Tibial artery (tissue), 4 donors: ENCODE measurements at regions of chr5 and their contacts with region 1.

Region 1: DNA sequence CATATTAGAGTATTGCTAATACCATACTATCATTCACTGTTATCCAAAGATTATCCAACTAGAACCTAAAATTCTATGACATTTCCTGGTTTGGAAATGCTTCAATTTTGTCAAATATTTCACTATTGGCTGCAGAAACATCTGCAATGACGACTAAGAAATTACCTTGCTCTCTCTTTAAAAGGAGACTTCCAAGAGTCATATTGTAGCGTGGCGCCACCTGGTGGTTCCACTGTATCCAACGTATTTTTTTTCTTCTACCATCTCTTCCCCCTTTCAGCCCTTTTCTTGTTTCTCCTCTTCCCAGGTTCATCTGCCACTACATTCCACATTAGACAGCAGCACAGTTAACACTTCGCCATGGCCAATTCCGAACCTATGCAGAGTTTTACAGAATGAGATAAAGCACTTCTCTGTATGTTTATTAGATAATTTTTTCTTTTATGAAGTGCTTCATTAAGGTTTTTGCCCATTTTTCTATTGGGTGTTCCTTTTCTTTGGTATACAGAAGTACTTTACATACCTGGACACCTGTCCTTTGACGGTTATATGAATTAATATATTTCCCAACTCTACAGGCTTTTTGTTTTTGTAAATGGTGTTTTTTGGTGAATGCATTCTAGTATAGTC is 153.5 kb downstream of the CDC42SE2 start:
- DNase-seq: peak; percentile 63 to 83
- H3K4me3 ChIP-seq: no peak overlapping the region
- H3K27ac ChIP-seq: no peak overlapping the region
- H3K4me1 ChIP-seq: no peaks in the 10 kb centered on the region
- H3K27me3 ChIP-seq: no peaks in the 10 kb centered on the region
- CTCF ChIP-seq: peak; percentile 80 to 84

Region 2: GRCh38 chr5:131165119-131165727 is 252.1 kb before region 1 on chr5 and contains the start of gene HINT1:
- intact Hi-C with region 1: loop called (anchors 10 kb)
- DNase-seq: peak; percentile 83 to 93
- H3K4me3 ChIP-seq: peak within 1 kb of the TSS; percentile 68 to 75
- H3K27ac ChIP-seq: peak within 1 kb of the TSS; percentile 87 to 93
- H3K4me1 ChIP-seq: peaks cover 0 to 23% (median 7%) of the 10 kb centered on the region in 4 donors
- H3K27me3 ChIP-seq: no peaks in the 10 kb centered on the region
- CTCF ChIP-seq: no peak

Region 3: DNA sequence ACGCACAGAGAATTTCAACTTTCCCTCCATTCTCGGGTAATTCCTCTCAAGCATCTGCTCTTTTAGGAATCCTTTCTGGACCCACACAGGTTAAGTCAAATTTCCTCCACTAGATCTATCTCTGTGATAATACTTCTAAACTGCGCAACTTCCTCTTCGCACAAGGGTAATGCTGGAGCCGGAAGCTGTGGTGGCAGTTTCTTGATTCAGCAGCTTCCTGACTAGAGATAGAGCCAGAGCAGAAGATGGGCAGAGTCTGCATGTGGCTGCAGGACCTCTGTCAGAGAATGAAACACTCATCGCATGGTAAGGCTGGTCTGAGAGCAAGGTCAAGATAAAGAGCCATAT is 164.6 kb before region 1 on chr5:
- intact Hi-C with region 1: no loop called
- DNase-seq: peak; percentile 67 to 69
- H3K4me3 ChIP-seq: no peak overlapping the region
- H3K27ac ChIP-seq: no peak overlapping the region
- H3K4me1 ChIP-seq: no peaks in the 10 kb centered on the region
- H3K27me3 ChIP-seq: no peaks in the 10 kb centered on the region
- CTCF ChIP-seq: no peak

Region 4: GRCh38 chr5:132073231-132074013 is 656.1 kb after region 1 on chr5 and contains the start of gene CSF2:
- intact Hi-C with region 1: no loop called
- DNase-seq: no peak
- H3K4me3 ChIP-seq: no peak within 1 kb of the TSS
- H3K27ac ChIP-seq: no peak within 1 kb of the TSS
- H3K4me1 ChIP-seq: no peaks in the 10 kb centered on the region
- H3K27me3 ChIP-seq: no peaks in the 10 kb centered on the region
- CTCF ChIP-seq: no peak